Heart left ventricle (tissue), 16 donors: ENCODE measurements at regions of chr16 and their contacts with region 1.

Region 1: DNA sequence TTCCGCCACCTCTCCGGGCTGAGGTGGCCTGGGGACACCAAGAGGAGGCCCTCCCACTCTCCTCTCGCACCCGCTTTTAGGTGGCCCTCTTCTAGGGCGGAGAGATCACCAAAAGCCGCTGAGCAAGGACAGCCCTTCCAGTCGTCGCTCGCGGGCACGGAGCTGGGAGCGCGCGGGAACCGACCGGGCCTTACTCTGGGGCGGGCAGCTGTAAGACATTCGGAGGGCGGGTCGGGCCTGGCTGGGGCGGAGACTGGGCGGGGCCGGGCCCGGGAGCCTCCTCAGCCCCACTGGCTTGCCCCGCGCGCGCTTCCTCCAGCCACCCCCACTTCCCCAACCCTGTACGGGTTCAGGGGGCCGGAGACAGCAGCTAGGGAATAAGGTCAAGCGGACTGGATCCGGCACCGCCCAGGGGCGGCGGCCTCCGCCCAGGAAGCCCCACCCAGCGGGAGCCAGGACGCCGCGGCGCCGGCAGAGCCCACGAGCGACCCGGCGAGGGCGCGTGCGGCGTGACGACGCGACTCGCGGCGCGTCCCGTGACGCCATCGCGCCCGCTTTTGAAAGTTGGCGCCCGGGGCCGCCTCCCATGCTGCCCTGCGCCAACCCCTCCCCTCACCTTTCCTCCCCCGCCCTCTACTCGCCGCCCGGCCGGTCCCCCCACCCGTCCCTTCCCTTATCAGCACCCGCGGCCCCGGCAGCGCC is 351 bp upstream of the CTCF start:
- DNase-seq: peak; percentile 97 to 99 (median 98)
- ATAC-seq: peak; percentile 91 to 96 (median 92)
- H3K4me3 ChIP-seq: peak overlapping the region; percentile 74 to 99 (median 95)
- H3K27ac ChIP-seq: peak overlapping the region; percentile 95 to 100 (median 99)
- H3K4me1 ChIP-seq: peaks cover 7 to 40% (median 28%) of the 10 kb centered on the region in 12 donors
- H3K27me3 ChIP-seq: no peaks in the 10 kb centered on the region
- CTCF ChIP-seq: no peak
- POLR2A ChIP-seq: peak in 1 of 2 donors; percentile 71

Region 2: DNA sequence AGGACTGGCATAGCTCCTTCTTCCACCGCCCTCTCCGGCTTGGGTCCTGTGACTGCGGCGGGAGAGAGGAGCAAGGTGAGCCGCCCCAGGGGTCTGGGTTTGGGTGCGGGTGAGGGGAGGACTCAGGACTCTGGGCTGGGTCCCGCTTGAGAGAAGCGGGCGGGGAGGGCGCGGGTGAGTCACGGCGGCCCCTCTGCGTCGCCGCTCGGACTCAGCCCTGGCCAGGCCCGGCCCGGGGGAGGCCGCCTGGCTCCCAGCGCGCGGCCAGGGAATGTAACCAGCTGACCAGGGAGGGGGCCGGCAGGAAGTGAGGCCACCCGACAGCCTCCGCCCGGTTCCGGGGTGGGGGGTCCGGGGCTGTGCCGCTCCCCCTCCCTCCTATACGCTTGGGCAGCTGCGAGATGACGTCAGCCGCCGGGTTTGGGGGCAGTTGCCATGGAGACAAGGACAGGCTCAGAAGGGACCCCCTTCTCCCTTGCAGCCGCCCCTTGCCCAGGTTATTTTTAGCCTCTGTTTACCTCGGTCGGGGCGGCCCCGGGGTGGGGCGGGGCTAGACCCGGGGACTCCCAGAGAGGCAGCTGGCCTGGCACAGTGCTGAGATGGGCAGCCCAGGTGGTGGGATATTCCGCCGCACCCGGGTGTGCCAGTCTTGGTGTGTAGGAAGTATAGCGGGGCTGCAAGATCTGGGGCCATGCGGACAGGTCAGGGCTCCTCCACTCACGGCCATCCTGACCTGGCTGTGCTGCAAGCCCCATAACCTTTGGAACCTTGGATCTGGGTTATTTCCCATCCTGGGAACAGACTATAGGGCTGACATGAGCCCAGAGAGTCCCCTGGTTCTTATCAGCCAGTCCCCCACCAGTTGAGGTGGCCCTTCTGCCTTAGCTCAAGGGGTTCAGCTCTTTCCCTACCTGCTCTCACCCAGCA is 31.7 kb before region 1 on chr16:
- intact Hi-C with region 1: loop called in 4 of 10 experiments (anchors 2 to 5 kb)
- DNase-seq: peak; percentile 88 to 91 (median 90)
- ATAC-seq: peak; percentile 63 to 89 (median 80)
- H3K4me3 ChIP-seq: peak overlapping the region; percentile 66 to 97 (median 82)
- H3K27ac ChIP-seq: peak overlapping the region; percentile 80 to 99 (median 96)
- H3K4me1 ChIP-seq: peaks cover 0 to 70% (median 49%) of the 10 kb centered on the region in 12 donors
- H3K27me3 ChIP-seq: no peaks in the 10 kb centered on the region
- CTCF ChIP-seq: no peak
- POLR2A ChIP-seq: peak; percentile 21 to 88

Region 3: GRCh38 chr16:67641779-67642708 is 80.1 kb after region 1 on chr16:
- intact Hi-C with region 1: loop called in 7 of 10 experiments (anchors 2 to 5 kb)
- DNase-seq: peak in 4 of 5 donors; percentile 76 to 90 (median 81)
- ATAC-seq: peak; percentile 88 to 97 (median 94)
- H3K4me3 ChIP-seq: no peak overlapping the region
- H3K27ac ChIP-seq: peak overlapping the region in 7 of 12 donors; percentile 16 to 54 (median 45)
- H3K4me1 ChIP-seq: peaks cover 0 to 30% (median 12%) of the 10 kb centered on the region in 12 donors
- H3K27me3 ChIP-seq: peaks cover 0 to 29% (median 18%) of the 10 kb centered on the region in 9 donors
- CTCF ChIP-seq: no peak
- POLR2A ChIP-seq: no peak

Region 4: DNA sequence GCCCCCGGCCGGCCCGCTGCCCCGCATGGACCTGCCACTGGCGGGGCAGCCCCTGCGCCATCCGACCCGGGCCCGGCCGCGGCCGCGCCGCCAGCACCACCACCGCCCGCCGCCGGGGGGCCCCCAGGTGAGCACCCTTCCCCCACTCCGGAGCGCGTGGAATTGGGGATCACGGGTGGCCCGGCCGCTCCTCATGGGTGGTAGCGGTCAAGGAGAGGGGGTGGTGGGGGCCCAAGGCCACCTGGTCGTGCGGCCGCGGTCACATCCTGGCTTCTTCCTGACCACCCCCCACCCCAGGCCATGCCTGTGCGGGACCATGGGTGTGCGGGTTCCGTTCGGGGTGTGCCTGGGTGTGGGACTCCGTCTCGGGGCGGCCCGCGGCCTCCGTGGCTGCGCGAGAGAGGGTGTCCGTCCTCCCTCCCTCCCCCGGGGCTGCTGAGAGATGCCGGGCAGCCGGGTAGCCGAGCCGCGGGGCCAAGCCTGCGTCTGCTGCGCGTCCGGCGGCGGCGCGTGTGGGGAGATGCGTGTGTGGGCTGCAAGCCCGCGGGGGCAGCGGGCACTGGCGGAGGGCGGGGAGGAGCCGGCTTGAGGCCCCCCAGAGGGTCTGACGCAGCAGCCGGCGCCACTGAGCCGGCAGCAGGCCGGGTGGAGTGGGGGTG is 91.3 kb after region 1 on chr16:
- intact Hi-C with region 1: loop called in 1 of 10 experiments (anchors 5 kb)
- DNase-seq: peak in 1 of 5 donors; percentile 60
- ATAC-seq: no peak
- H3K4me3 ChIP-seq: peak overlapping the region; percentile 16 to 56 (median 42)
- H3K27ac ChIP-seq: no peak overlapping the region
- H3K4me1 ChIP-seq: peaks cover 0 to 31% (median 9%) of the 10 kb centered on the region in 12 donors
- H3K27me3 ChIP-seq: peaks cover 24 to 68% (median 47%) of the 10 kb centered on the region in 9 donors
- CTCF ChIP-seq: peak in 2 of 12 donors; percentile 8 to 30
- POLR2A ChIP-seq: no peak

Region 5: DNA sequence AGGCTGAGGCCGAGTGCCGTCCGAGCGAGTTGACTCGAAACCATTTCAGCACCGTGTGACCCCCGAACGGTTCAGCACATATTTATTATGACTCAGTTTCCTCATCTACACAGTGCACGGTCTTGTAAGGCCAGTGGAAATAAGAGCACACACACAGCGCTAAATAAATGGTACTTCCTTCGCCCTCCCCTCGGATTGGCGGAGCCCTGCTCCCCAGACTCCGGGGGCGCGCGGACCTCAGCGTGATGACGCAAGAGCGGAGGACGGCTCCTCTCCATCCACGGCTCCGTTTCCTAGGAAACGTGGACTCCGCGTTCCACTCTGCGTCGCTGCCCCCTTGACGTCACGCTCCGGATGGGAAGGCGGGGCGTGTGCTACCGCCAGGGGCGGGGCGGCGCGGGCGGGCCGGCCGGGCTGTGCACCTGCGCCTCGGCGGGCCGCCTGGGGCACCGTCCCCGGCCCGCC is 98.6 kb after region 1 on chr16 and contains the start of gene PARD6A:
- intact Hi-C with region 1: loop called in 5 of 10 experiments (anchors 1 to 5 kb)
- DNase-seq: peak; percentile 96 to 98 (median 97)
- ATAC-seq: peak; percentile 84 to 95 (median 87)
- H3K4me3 ChIP-seq: peak within 1 kb of the TSS; percentile 73 to 97 (median 82)
- H3K27ac ChIP-seq: peak within 1 kb of the TSS; percentile 80 to 97 (median 93)
- H3K4me1 ChIP-seq: peaks cover under 1 to 26% (median 20%) of the 10 kb centered on the region in 12 donors
- H3K27me3 ChIP-seq: peaks cover 0 to 5% (median 0%) of the 10 kb centered on the region in 9 donors
- CTCF ChIP-seq: peak in 3 of 12 donors; percentile 14 to 21 (median 15)
- POLR2A ChIP-seq: peak in 1 of 2 donors; percentile 0
- total RNA-seq, gene PARD6A: 1.7 to 5.6 (median 2.9) TPM

Region 6: GRCh38 chr16:67667817-67668494 is 106.0 kb after region 1 on chr16:
- intact Hi-C with region 1: loop called in 6 of 10 experiments (anchors 2 to 5 kb)
- DNase-seq: peak; percentile 84 to 91 (median 89)
- ATAC-seq: peak; percentile 83 to 91 (median 85)
- H3K4me3 ChIP-seq: peak overlapping the region in 10 of 12 donors; percentile 65 to 94 (median 84)
- H3K27ac ChIP-seq: peak overlapping the region in 11 of 12 donors; percentile 85 to 94 (median 89)
- H3K4me1 ChIP-seq: peaks cover 5 to 39% (median 28%) of the 10 kb centered on the region in 12 donors
- H3K27me3 ChIP-seq: no peaks in the 10 kb centered on the region
- CTCF ChIP-seq: peak; percentile 66 to 94 (median 84)
- POLR2A ChIP-seq: peak in 1 of 2 donors; percentile 6